CD4-positive, alpha-beta memory T cell (primary cell): ENCODE measurements at regions of chr7 and their contacts with region 1.

Region 1: DNA sequence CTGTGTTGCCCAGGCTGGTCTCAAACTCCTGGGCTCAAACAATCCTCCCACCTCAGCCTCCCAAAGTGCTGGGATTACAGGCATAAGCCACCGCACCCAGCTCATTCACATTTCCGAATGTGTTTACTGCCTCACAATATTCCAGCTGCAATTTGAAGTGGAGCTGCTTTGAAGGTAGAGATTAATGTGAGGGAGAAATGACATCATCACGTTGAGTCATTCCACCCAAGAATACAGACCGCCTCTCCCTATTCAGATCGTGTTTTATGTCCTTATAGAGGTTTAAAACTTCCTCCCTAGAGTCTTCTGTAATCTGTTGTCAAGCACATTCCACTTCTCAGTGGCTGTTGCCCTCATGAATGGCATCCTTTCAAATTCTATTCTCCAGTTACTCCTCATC is 100.4 kb upstream of the PDGFA start:
- DNase-seq: no peak
- H3K4me3 ChIP-seq: no peak overlapping the region
- H3K4me3 Mint-ChIP-seq: peak overlapping the region in 3 of 8 donors; percentile 10 to 63 (median 46)
- H3K27ac ChIP-seq: no peak overlapping the region
- H3K27ac Mint-ChIP-seq: peak overlapping the region; percentile 85 to 100 (median 98)
- H3K4me1 ChIP-seq: peaks cover 49% of the 10 kb centered on the region
- H3K4me1 Mint-ChIP-seq: peaks cover 29 to 50% (median 37%) of the 10 kb centered on the region in 4 donors
- H3K27me3 ChIP-seq: no peaks in the 10 kb centered on the region
- H3K27me3 Mint-ChIP-seq: no peaks in the 10 kb centered on the region

Region 2: DNA sequence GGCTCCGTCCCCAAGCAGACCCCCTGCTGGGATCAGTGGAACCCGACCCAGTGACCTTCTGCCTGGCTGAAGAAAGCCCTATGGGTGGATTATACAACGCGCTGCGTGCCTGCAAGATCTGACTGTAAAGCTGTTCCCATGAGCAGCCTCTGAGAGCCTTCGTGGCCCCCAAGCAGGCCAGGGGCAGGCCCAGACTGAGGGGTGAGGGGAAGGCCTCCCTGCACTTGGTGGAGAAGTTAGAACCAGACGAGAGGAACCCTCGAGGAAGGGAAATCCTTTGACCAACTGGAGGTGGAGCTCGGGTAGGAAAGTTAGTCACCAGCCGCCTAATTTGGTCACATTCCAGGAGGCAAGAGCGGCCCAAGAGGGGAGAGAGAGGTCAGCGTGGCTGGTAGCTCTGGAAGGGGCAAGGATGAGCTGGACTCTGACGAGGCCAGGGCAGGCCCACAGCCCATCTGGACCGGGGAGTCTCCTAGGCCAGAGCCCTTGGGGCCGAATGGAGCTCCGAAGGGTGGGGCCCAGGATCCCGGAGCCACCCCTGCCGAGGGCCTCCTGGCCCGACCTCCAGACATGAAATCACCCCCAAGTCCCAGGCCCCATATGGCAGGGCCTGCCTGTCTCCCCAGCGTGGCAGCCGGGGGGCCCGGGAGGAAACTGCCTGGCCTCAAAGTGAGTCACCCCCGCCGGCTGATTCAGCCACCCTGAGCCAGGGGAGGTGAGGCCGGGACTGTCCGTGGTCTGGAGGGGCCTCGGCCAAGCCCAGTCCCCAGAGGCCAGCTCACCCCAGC is 77.1 kb before region 1 on chr7:
- CTCF ChIA-PET with region 1: no interaction called
- POLR2A ChIA-PET with region 1: no interaction called
- intact Hi-C with region 1: no loop called
- DNase-seq: no peak
- H3K4me3 ChIP-seq: no peak overlapping the region
- H3K4me3 Mint-ChIP-seq: no peak overlapping the region
- H3K27ac ChIP-seq: no peak overlapping the region
- H3K27ac Mint-ChIP-seq: no peak overlapping the region
- H3K4me1 ChIP-seq: no peaks in the 10 kb centered on the region
- H3K4me1 Mint-ChIP-seq: no peaks in the 10 kb centered on the region
- H3K27me3 ChIP-seq: no peaks in the 10 kb centered on the region
- H3K27me3 Mint-ChIP-seq: no peaks in the 10 kb centered on the region

Region 3: GRCh38 chr7:552868-553635 is 67.0 kb before region 1 on chr7:
- CTCF ChIA-PET with region 1: no interaction called
- POLR2A ChIA-PET with region 1: no interaction called
- intact Hi-C with region 1: no loop called
- DNase-seq: no peak
- H3K4me3 ChIP-seq: no peak overlapping the region
- H3K4me3 Mint-ChIP-seq: no peak overlapping the region
- H3K27ac ChIP-seq: no peak overlapping the region
- H3K27ac Mint-ChIP-seq: no peak overlapping the region
- H3K4me1 ChIP-seq: no peaks in the 10 kb centered on the region
- H3K4me1 Mint-ChIP-seq: no peaks in the 10 kb centered on the region
- H3K27me3 ChIP-seq: no peaks in the 10 kb centered on the region
- H3K27me3 Mint-ChIP-seq: no peaks in the 10 kb centered on the region

Region 4: DNA sequence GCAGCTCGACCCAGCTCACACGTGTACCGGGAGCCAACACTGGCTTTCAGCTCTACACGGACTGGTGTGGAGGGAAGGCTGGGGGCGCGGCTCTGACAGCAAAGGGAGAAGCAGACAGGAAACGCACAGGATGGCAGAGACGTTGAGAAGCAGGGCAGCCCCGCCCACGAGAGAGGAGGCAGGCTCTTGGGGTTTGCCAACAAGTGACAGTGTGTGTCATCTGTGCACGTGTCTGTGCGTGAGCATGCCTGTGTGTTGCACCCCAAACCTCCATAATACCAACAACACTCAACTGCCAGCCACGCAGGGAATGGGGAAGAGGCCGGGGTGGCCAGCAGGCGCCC is 36.0 kb before region 1 on chr7:
- CTCF ChIA-PET with region 1: interaction called, 3 read pairs
- POLR2A ChIA-PET with region 1: interaction called, 28 read pairs
- intact Hi-C with region 1: loop called (anchors 1 kb)
- DNase-seq: peak; percentile 85 to 98 (median 91)
- H3K4me3 ChIP-seq: peak overlapping the region; percentile 30 to 87
- H3K4me3 Mint-ChIP-seq: peak overlapping the region; percentile 87 to 98 (median 92)
- H3K27ac ChIP-seq: peak overlapping the region; percentile 77
- H3K27ac Mint-ChIP-seq: peak overlapping the region; percentile 87 to 98 (median 96)
- H3K4me1 ChIP-seq: peaks cover 25% of the 10 kb centered on the region
- H3K4me1 Mint-ChIP-seq: peaks cover 24 to 44% (median 36%) of the 10 kb centered on the region in 4 donors
- H3K27me3 ChIP-seq: no peaks in the 10 kb centered on the region
- H3K27me3 Mint-ChIP-seq: no peaks in the 10 kb centered on the region

Region 5: DNA sequence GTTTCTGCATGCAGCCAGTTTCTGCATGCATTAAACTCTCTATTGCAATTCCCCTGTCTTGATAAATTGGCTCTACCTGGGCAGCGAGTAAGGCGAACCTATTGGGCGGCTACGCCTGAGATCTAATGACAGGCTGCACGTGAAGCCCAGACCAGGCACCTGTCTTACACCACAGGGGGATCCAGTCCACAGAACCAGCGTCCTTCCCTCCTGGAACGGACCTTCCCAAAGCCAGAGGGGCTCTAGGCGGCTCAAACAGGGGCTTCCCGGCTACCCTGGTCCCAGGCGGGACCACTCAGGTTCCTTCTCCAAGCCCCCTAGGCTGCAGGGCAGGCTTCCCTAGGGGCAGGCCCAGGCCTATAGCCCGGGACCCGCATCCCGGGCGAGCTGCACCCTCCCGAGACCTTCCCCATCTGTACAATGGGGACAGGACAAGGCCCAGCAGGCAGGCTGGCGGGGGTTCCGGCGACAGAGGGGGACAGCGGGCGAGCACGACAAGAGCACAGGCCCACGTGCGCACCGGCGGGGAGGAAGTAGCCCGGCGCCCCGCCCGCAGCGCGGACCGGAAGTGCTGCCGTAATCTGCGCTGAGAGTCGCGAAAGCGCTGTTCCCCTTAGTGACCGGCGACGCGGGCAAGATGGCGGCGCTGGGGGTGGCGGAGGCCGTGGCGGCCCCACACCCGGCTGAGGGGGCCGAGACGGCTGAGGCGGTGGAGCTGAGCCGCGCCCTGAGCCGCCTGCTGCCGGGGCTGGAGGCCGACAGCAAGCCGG is 106.2 kb after region 1 on chr7 and contains the start of gene DNAAF5:
- CTCF ChIA-PET with region 1: no interaction called
- POLR2A ChIA-PET with region 1: interaction called, 8 read pairs
- intact Hi-C with region 1: loop called (anchors 5 kb)
- DNase-seq: peak; percentile 82 to 85 (median 85)
- H3K4me3 ChIP-seq: peak within 1 kb of the TSS; percentile 48 to 52
- H3K4me3 Mint-ChIP-seq: peak within 1 kb of the TSS; percentile 72 to 89 (median 84)
- H3K27ac ChIP-seq: peak within 1 kb of the TSS; percentile 62
- H3K27ac Mint-ChIP-seq: peak within 1 kb of the TSS; percentile 53 to 88 (median 76)
- H3K4me1 ChIP-seq: peaks cover 17% of the 10 kb centered on the region
- H3K4me1 Mint-ChIP-seq: peaks cover 18 to 29% (median 20%) of the 10 kb centered on the region in 4 donors
- H3K27me3 ChIP-seq: no peaks in the 10 kb centered on the region
- H3K27me3 Mint-ChIP-seq: no peaks in the 10 kb centered on the region
- total RNA-seq, gene DNAAF5: 15.9 to 19.4 TPM